ENCODE measurements at regions of chr6 and their contacts with region 1.

Region 1: DNA sequence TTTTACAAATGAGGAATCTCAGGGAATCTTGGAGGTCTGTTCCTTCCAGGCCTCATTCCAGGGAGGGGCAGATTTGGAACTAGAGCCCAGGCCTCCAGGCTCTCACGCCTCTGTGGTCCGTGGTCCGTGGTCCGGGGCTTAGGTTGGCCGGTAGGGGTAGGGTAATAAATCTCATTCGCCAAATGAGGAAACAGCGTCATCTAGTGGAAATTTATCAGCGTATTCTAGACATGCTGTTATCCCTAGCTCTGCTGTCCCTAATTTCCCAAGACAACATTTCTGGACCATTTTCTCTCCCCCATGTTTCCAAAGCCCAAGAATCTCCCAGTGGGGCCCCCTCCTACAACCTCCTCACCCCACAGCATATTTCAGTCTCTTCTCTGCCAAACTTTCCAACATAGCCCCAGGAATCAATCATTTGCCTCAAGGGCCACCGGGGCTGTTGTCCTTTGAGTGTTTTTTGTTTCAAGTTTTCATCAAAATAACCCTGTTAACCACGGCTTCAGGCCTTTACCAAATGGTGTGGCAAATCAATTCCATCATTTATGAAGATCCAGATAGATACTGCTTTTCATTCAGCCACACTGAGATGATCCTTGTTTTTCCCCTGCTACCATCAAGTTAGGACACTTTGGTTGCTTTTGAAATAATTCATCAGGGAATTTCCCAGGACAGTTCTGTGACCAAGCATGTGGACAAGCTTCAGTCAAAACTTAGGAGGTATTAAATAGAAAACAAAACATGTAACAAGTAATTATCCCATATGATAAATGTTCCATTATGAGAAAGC is 126.8 kb downstream of the ALDH8A1 start:
- DNase-seq: peak in 39 of 42 donors; percentile 7 to 86 (median 48)

Region 2: DNA sequence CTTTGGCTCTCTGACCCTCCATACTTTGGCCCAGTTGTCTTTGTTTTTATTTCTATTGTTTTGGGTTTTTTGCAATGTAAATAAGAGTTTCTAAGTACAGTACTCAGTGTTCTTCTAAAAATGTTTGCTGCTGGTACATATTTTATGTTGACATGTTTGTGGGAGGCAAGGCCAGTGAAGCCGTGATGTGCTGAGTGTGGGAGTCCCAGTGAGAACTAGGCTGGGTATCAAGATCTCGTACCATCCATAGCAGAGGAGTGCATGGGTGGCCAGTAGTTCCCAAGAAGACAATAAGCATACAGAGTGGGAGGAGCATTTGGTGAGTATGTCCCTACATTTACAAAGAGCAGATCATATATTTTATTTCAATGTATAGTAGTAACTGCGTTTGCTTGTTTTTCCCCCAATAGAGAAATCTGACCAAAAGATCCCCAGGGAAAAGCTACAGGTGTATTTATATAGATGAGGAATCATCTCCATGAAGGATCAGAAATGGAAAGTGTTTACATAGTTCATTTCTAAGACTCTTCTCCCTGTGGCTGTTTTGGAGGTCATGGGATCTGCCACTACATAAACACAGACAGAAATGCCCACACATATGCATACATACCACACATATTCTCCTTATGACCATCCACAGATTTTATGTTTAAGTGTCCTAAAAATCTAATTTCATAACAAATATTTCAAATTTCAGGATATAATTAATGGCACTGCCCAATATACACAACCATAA is 159.1 kb before region 1 on chr6:
- intact Hi-C with region 1: loop called (anchors 10 kb)
- DNase-seq: no peak